A549 (cell line): ENCODE measurements at regions of chr22 and their contacts with region 1.

Region 1: GRCh38 chr22:50326959-50327710 is at the start of gene DENND6B:
- DNase-seq: peak; percentile 49 to 71
- ATAC-seq: peak; percentile 90 to 93
- H3K4me3 ChIP-seq: peak within 1 kb of the TSS; percentile 92
- H3K27ac ChIP-seq: peak within 1 kb of the TSS; percentile 97
- H3K4me1 ChIP-seq: peaks cover 17% of the 10 kb centered on the region; the same call in 2 of the 3 replicates
- CTCF ChIP-seq: peak; percentile 84
- EP300 ChIP-seq: no peak
- POLR2A ChIP-seq: peak; percentile 38
- RAD21 ChIP-seq: peak in 1 of 2 experiments; percentile 62; a peak in 3 of 5 replicates
- polyA plus RNA-seq, gene DENND6B: 1.6 and 1.7 TPM in 2 replicates

Region 2: GRCh38 chr22:50250555-50251476 is 76.3 kb before region 1 on chr22 and contains the start of gene HDAC10:
- CTCF ChIA-PET with region 1: interaction called, 74 read pairs
- POLR2A ChIA-PET with region 1: no interaction called
- DNase-seq: peak in 1 of 2 experiments; percentile 43
- ATAC-seq: peak; percentile 46 to 71
- H3K4me3 ChIP-seq: peak within 1 kb of the TSS; percentile 53
- H3K27ac ChIP-seq: peak within 1 kb of the TSS; percentile 76 to 93
- H3K4me1 ChIP-seq: peaks cover 17% of the 10 kb centered on the region; the same call in 2 of the 3 replicates
- CTCF ChIP-seq: no peak
- EP300 ChIP-seq: no peak
- POLR2A ChIP-seq: no peak; the same call in 1 of the 2 replicates
- RAD21 ChIP-seq: no peak
- polyA plus RNA-seq, gene HDAC10: 2.4 and 2.5 TPM in 2 replicates

Region 3: DNA sequence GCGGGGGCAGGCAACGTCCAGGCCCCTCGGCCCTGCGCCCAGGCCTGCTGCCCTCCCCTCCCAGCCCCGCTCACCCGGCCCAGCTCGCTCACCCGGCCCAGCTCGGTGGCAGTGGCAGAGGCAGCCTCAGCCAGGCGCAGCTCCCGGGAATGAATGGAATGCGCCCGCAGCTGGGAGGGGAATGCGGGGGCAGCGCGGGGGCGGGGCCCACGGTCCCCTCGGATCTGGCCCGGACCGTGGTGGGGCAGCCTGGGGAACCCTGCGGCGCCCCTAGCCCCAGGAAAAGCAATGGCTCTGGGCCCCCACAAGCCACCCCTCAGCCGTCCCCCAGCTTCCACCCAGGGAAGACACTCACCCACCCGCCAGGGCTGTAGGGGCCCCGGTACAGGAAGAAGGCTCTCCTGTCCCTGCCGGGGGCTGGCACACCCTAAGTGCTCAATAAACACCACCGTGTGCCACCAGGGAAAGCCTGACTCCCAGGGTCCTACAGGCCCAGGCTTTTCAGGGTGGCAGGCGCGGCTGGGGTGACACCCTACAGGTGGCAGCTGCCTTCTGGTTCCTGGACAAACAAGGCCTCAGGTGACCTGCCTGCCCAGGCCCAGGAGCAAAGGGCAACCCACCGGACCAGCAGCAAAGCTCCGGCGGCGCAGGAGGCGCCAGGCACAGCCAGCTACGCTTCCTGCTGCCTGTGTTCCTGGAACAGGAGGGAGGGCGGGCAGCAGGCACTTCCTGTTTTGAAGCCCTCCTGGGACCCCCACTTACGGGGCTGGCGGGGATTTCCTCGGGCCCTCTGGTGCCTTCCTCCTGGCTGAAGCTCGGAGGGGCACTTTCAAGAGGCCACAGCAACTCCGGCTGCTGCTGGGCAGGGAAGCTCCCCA is 33.5 kb before region 1 on chr22:
- CTCF ChIA-PET with region 1: interaction called, 17 read pairs
- POLR2A ChIA-PET with region 1: interaction called, 3 read pairs
- DNase-seq: peak in 1 of 2 experiments; percentile 62
- ATAC-seq: peak; percentile 71 to 84
- H3K4me3 ChIP-seq: peak overlapping the region; percentile 35
- H3K27ac ChIP-seq: peak overlapping the region; percentile 92 to 94
- H3K4me1 ChIP-seq: peaks cover 48% of the 10 kb centered on the region
- CTCF ChIP-seq: no peak
- EP300 ChIP-seq: no peak
- POLR2A ChIP-seq: no peak
- RAD21 ChIP-seq: no peak

Region 4: GRCh38 chr22:50314455-50315288 is 12.5 kb before region 1 on chr22:
- CTCF ChIA-PET with region 1: interaction called, 19 read pairs
- POLR2A ChIA-PET with region 1: interaction called, 4 read pairs
- DNase-seq: no peak
- ATAC-seq: peak in 1 of 2 experiments; percentile 72; a peak in 3 of 6 replicates
- H3K4me3 ChIP-seq: no peak overlapping the region
- H3K27ac ChIP-seq: no peak overlapping the region
- H3K4me1 ChIP-seq: 0 out of 3 replicates have a peak, but pooled peaks cover 3% of the 10 kb centered on the region
- CTCF ChIP-seq: no peak
- EP300 ChIP-seq: no peak
- POLR2A ChIP-seq: no peak
- RAD21 ChIP-seq: no peak

Region 5: GRCh38 chr22:50474668-50475492 is 147.7 kb after region 1 on chr22 and contains the start of gene SBF1:
- CTCF ChIA-PET with region 1: no interaction called
- POLR2A ChIA-PET with region 1: no interaction called
- DNase-seq: peak; percentile 82 to 86
- ATAC-seq: peak; percentile 84 to 94
- H3K4me3 ChIP-seq: peak within 1 kb of the TSS; percentile 76
- H3K27ac ChIP-seq: peak within 1 kb of the TSS; percentile 86 to 96
- H3K4me1 ChIP-seq: peaks cover 16% of the 10 kb centered on the region; the same call in 1 of the 3 replicates
- CTCF ChIP-seq: no peak
- EP300 ChIP-seq: no peak
- POLR2A ChIP-seq: peak; percentile 69
- RAD21 ChIP-seq: no peak
- polyA plus RNA-seq, gene SBF1: 9.6 and 12.7 TPM in 2 replicates